ENCODE measurements at regions of chr14 and their contacts with region 1.

Region 1: GRCh38 chr14:65302571-65303189 is 109.8 kb upstream of the FUT8 start:
- DNase-seq: peak; percentile 56
- H3K4me3 Mint-ChIP-seq: peak overlapping the region; percentile 77
- H3K27ac Mint-ChIP-seq: peak overlapping the region; percentile 99
- H3K4me1 Mint-ChIP-seq: peaks cover 81% of the 10 kb centered on the region
- H3K27me3 Mint-ChIP-seq: no peaks in the 10 kb centered on the region

Region 2: DNA sequence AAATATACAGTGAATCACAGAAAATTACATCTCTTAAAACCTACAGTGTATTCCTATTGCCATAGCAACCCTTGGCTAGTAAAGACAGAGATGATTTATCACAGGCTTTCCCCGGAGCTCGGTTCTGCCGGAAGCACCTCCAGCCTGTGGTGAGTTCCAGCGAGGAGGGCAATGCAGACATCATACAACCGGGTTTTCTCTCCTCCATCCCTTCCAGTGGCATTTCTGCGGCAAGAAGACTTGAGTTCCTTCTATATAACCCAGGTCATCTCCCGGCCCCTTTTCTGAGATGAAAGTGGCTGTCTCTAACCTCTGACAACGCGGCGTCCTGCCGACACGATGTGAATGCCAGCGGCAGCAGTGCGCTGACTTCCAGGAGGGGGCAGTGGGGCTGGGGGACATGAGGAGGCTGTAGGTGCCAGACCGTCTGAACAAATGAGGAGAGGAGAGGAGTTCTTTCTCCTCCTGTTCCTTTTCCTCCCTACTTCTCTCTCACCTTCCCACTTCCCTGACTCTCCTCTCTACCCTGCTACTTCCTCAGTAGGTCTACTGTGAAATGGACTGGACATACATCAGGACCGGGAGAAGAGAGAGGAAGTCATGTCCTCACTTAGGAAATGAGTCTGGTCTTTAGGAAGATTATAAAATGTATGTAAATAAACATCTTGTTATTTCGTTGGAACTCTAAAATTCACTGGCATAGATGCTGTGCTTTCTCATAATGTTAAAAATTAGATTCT is 131.7 kb before region 1 on chr14:
- intact Hi-C with region 1: loop called (anchors 2 kb)
- DNase-seq: peak; percentile 49
- H3K4me3 Mint-ChIP-seq: peak overlapping the region; percentile 73
- H3K27ac Mint-ChIP-seq: peak overlapping the region; percentile 88
- H3K4me1 Mint-ChIP-seq: peaks cover 48% of the 10 kb centered on the region
- H3K27me3 Mint-ChIP-seq: no peaks in the 10 kb centered on the region

Region 3: DNA sequence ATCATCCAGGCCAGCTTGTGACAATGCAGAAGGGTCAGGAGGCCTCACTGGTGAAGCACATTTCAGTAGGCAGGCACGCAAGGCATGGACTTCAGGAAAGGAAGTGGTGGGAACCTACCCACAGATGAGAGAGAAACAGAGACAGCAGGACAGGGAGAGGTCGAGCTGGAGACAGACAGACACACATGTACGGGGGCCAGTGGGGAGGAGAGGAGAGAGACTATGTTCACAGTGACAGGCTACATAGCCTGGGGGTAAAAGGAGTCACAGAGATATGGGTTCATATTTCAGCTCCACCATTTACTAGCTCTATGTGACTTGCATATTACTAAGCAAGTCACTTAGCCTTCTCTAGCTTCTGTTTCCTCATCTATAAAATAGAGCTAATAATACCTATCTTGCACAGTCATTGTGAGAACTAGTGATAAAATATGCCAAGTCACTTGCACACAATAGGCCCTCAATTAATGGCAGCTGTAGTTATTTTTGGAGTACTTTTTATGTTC is 18.7 kb after region 1 on chr14:
- intact Hi-C with region 1: loop called (anchors 2 kb)
- DNase-seq: no peak
- H3K4me3 Mint-ChIP-seq: peak overlapping the region; percentile 11
- H3K27ac Mint-ChIP-seq: peak overlapping the region; percentile 84
- H3K4me1 Mint-ChIP-seq: peaks cover 56% of the 10 kb centered on the region
- H3K27me3 Mint-ChIP-seq: no peaks in the 10 kb centered on the region

Region 4: GRCh38 chr14:65336191-65336591 is 33.5 kb after region 1 on chr14:
- intact Hi-C with region 1: loop called (anchors 1 kb)
- DNase-seq: peak; percentile 63
- H3K4me3 Mint-ChIP-seq: peak overlapping the region; percentile 91
- H3K27ac Mint-ChIP-seq: peak overlapping the region; percentile 96
- H3K4me1 Mint-ChIP-seq: peaks cover 59% of the 10 kb centered on the region
- H3K27me3 Mint-ChIP-seq: no peaks in the 10 kb centered on the region

Region 5: DNA sequence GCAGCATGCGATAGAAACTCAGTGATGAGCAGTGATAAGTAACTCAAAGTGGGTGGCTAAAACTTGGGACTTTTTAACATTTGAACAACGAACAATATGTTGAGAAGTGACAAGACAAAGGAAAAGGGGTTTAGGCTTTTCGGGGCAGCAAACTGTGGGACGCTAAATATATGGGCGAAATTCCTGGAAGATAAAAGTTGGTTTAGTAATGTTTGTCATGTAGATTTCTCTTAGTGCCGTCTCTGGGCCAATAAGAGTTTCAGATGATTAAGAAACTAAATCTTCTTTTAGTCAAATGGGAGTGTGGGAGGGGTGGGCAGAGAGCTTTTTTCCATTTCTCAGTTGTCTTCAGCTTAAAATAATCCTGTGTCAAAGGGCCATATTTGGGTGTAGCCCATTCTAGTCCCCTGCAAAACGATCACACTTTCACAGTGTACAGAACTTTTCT is 68.1 kb after region 1 on chr14:
- intact Hi-C with region 1: loop called (anchors 1 kb)
- DNase-seq: no peak
- H3K4me3 Mint-ChIP-seq: peak overlapping the region; percentile 4
- H3K27ac Mint-ChIP-seq: peak overlapping the region; percentile 89
- H3K4me1 Mint-ChIP-seq: peaks cover 76% of the 10 kb centered on the region
- H3K27me3 Mint-ChIP-seq: no peaks in the 10 kb centered on the region

Region 6: DNA sequence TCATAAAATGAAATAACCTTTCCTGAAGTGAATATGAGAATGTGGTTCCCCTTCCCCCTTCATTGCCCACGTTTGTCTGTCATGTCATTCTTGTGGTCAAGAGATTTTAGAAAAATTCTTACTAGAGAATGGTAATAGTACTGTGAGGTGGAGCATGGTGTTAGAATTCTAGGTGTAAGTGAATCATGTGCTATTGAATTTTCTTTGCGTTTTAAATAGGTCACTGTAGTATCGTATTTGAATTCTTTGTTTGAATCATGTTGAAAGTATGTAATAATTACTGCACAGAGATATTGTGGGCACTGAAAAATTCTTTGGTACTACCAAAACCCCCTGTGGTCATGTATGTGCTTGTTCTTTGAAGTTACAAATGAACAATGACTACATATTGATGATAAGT is 159.7 kb after region 1 on chr14:
- intact Hi-C with region 1: loop called (anchors 5 kb)
- DNase-seq: no peak
- H3K4me3 Mint-ChIP-seq: peak overlapping the region; percentile 5
- H3K27ac Mint-ChIP-seq: peak overlapping the region; percentile 63
- H3K4me1 Mint-ChIP-seq: peaks cover 41% of the 10 kb centered on the region
- H3K27me3 Mint-ChIP-seq: no peaks in the 10 kb centered on the region

Region 7: GRCh38 chr14:65637780-65638179 is 335.1 kb after region 1 on chr14:
- intact Hi-C with region 1: loop called (anchors 5 kb)
- DNase-seq: peak; percentile 31
- H3K4me3 Mint-ChIP-seq: peak overlapping the region; percentile 34
- H3K27ac Mint-ChIP-seq: peak overlapping the region; percentile 79
- H3K4me1 Mint-ChIP-seq: peaks cover 49% of the 10 kb centered on the region
- H3K27me3 Mint-ChIP-seq: no peaks in the 10 kb centered on the region